Naive thymus-derived CD8-positive, alpha-beta T cell (primary cell): ENCODE measurements at regions of chr17 and their contacts with region 1.

Region 1: DNA sequence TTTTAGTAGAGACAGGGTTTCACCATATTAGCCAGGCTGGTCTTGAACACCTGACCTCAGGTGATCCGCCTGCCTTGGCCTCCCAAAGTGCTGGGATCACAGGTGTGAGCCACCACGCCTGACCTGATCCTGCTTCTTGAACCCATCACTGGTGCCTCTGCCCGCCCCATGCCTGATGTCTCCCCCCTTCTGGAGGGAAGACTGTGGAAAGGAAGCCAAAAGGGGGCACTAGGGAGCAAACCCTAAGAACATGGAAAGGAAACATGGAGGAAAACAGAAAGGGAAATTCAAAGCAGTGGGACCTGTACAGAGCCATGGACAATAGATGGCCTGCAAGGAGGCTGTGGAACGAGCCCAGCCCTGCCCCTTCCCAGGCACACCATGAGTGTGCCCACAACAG is 31.1 kb upstream of the FASN start:
- DNase-seq: no peak
- ATAC-seq: no peak
- H3K4me3 Mint-ChIP-seq: no peak overlapping the region
- H3K27ac Mint-ChIP-seq: peak overlapping the region; percentile 61 to 100 (median 100)
- H3K4me1 Mint-ChIP-seq: peaks cover 14 to 51% (median 42%) of the 10 kb centered on the region in 4 donors
- H3K27me3 Mint-ChIP-seq: no peaks in the 10 kb centered on the region

Region 2: GRCh38 chr17:82037113-82037888 is 91.8 kb before region 1 on chr17 and contains the start of gene DCXR:
- POLR2A ChIA-PET with region 1: interaction called, 18 read pairs
- DNase-seq: peak; percentile 90 to 97 (median 93)
- ATAC-seq: peak; percentile 92 to 93
- H3K4me3 Mint-ChIP-seq: peak within 1 kb of the TSS; percentile 81 to 96 (median 91)
- H3K27ac Mint-ChIP-seq: peak within 1 kb of the TSS; percentile 66 to 95 (median 91)
- H3K4me1 Mint-ChIP-seq: peaks cover 15 to 31% (median 28%) of the 10 kb centered on the region in 4 donors
- H3K27me3 Mint-ChIP-seq: no peaks in the 10 kb centered on the region
- polyA plus RNA-seq, gene DCXR: 113 to 185 (median 127) TPM

Region 3: DNA sequence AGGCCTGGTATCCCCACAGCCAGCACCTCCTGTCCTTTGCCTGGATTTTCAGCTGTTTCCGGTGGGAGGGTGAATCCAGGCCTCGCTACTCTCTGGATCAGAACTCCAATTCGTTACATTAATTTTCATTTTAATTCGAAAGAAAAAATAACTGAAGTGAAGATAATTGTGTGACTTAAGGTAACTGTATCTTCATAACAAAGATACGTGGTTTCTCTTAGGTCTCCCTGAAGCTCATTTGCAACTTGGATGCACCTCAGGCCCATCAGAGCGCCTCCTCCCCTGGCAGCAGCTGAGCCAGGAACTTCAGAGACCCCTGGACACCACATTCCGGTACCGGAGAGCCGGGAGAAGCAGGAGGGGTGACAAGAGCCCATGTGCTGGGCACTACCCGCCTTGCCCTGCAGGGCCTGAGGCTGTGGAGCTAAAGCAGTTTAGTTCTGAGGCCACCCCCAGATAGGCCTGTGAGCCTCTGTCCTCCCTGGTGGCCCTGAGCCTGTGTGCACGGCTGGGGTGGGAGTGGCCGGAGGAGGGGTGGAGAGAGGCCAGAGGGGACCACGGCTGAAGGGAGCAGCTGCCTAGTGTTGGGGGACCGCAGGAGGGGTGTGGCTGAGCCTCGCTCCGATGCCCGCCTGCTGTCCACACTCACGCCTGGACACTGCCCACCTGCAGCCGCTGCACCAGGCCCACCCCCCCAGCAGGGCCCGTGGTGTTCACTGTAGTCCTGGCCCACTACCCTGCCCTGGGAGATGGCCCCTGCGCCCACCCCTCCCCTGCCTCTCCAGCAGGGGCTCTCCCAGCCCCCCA is 52.1 kb before region 1 on chr17:
- POLR2A ChIA-PET with region 1: no interaction called
- DNase-seq: no peak
- ATAC-seq: no peak
- H3K4me3 Mint-ChIP-seq: peak overlapping the region in 1 of 10 donors; percentile 42
- H3K27ac Mint-ChIP-seq: peak overlapping the region in 1 of 10 donors; percentile 28
- H3K4me1 Mint-ChIP-seq: no peaks in the 10 kb centered on the region
- H3K27me3 Mint-ChIP-seq: no peaks in the 10 kb centered on the region

Region 4: GRCh38 chr17:82098072-82098821 is 30.8 kb before region 1 on chr17 and contains the start of gene FASN:
- POLR2A ChIA-PET with region 1: interaction called, 73 read pairs
- DNase-seq: peak; percentile 74 to 93 (median 90)
- ATAC-seq: peak; percentile 74 to 84
- H3K4me3 Mint-ChIP-seq: peak within 1 kb of the TSS; percentile 22 to 82 (median 64)
- H3K27ac Mint-ChIP-seq: peak within 1 kb of the TSS in 5 of 10 donors; percentile 52 to 87 (median 71)
- H3K4me1 Mint-ChIP-seq: peaks cover 2 to 27% (median 12%) of the 10 kb centered on the region in 4 donors
- H3K27me3 Mint-ChIP-seq: no peaks in the 10 kb centered on the region
- polyA plus RNA-seq, gene FASN: 0.33 to 2.4 (median 0.80) TPM

Region 5: DNA sequence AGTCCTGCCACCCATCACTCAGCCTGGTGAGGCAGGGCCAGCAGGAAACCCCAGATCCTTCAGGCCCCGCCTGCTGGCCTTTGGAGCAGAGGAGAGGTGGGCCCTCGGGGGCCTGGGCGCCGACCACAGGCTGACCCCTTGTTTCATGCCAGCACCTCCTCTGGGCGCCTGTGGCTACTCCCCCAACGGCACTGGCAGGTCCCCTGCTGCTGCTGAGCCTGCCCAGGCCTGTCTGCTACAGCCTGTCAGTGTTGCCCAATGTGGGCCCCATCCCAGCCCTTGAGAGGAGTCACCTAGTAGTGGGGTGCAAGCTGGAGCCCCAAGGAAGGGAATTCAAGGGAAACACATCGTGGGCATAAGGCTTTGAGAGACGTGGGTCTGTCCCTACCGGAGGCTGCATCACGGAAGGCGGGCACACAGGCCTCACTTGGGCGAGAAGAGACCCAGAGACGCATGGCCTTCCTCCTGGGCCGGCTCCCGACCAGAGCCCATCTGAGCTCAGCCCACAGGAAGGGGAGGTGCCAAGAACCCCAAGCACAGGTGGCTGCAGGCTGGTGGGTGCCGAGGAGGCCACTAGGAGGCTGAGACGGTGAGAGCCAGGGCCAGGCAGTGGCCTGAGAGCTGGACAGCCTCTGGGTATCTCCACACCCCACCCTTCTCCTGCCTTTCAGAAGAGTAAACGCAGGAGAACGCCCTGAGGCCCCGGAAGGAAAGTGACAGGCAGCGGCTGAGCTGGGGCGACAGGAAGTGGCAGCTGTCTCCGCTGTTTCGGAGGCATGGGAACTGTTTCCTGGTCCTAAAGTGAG is 23.0 kb before region 1 on chr17:
- POLR2A ChIA-PET with region 1: interaction called, 73 read pairs
- DNase-seq: peak; percentile 25 to 75 (median 48)
- ATAC-seq: peak; percentile 77 to 91
- H3K4me3 Mint-ChIP-seq: peak overlapping the region; percentile 81 to 92 (median 88)
- H3K27ac Mint-ChIP-seq: peak overlapping the region; percentile 93 to 98 (median 97)
- H3K4me1 Mint-ChIP-seq: peaks cover 10 to 54% (median 35%) of the 10 kb centered on the region in 4 donors
- H3K27me3 Mint-ChIP-seq: no peaks in the 10 kb centered on the region

Region 6: DNA sequence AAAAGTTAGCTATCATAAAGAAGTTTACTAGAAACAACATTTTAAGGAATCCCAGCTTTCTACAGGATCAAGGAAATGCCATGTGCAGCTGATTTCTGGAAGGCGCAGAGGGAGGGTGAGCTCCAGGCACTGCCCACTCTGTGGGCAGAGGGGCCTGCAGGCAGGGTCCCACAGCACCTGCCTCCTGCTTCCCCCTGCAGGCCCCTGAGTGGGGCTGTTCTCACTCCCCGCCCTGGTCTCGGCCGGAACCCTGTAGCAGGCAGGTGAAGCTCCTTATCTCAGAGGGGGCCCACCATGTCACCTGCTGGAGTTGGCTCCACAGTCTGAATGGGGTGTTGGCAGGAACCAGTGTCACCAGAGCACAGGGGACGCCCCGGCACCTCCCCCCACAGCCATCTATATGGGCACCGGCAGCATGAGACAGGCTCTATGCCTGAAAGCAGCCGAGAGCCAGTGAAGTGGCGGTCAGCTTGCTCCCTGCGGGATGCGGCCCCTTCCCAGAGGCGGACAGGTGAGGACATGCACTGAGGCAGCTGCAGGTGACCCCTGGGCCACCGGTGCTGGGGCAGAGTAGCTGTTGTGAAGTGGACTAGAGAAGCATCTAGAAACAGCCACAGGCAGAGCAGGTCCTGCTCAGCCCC is 16.6 kb after region 1 on chr17:
- POLR2A ChIA-PET with region 1: interaction called, 10 read pairs
- DNase-seq: peak in 1 of 10 donors; percentile 40
- ATAC-seq: no peak
- H3K4me3 Mint-ChIP-seq: no peak overlapping the region
- H3K27ac Mint-ChIP-seq: no peak overlapping the region
- H3K4me1 Mint-ChIP-seq: peaks cover 0 to 6% (median 3%) of the 10 kb centered on the region in 4 donors
- H3K27me3 Mint-ChIP-seq: no peaks in the 10 kb centered on the region